ENCODE measurements at regions of chr14 and their contacts with region 1.

Region 1: GRCh38 chr14:50311975-50312733 is at the starts of genes DMAC2L and L2HGDH:
- DNase-seq: peak; percentile 80 to 95 (median 88)
- ATAC-seq: peak; percentile 94
- H3K4me3 ChIP-seq: peak within 1 kb of the TSS; percentile 88
- H3K4me3 Mint-ChIP-seq: peak within 1 kb of the TSS; percentile 86 to 99 (median 96)
- H3K27ac ChIP-seq: peak within 1 kb of the TSS; percentile 84
- H3K27ac Mint-ChIP-seq: peak within 1 kb of the TSS; percentile 95 to 99 (median 98)
- H3K4me1 ChIP-seq: peaks cover 11 to 12% of the 10 kb centered on the region in 2 donors
- H3K4me1 Mint-ChIP-seq: peaks cover 16 to 56% (median 46%) of the 10 kb centered on the region in 7 donors
- H3K27me3 ChIP-seq: no peaks in the 10 kb centered on the region
- H3K27me3 Mint-ChIP-seq: no peaks in the 10 kb centered on the region
- total RNA-seq, gene DMAC2L: 15.5 to 21.2 (median 16.7) TPM
- total RNA-seq, gene L2HGDH: 3.7 to 10.1 (median 4.8) TPM

Region 2: DNA sequence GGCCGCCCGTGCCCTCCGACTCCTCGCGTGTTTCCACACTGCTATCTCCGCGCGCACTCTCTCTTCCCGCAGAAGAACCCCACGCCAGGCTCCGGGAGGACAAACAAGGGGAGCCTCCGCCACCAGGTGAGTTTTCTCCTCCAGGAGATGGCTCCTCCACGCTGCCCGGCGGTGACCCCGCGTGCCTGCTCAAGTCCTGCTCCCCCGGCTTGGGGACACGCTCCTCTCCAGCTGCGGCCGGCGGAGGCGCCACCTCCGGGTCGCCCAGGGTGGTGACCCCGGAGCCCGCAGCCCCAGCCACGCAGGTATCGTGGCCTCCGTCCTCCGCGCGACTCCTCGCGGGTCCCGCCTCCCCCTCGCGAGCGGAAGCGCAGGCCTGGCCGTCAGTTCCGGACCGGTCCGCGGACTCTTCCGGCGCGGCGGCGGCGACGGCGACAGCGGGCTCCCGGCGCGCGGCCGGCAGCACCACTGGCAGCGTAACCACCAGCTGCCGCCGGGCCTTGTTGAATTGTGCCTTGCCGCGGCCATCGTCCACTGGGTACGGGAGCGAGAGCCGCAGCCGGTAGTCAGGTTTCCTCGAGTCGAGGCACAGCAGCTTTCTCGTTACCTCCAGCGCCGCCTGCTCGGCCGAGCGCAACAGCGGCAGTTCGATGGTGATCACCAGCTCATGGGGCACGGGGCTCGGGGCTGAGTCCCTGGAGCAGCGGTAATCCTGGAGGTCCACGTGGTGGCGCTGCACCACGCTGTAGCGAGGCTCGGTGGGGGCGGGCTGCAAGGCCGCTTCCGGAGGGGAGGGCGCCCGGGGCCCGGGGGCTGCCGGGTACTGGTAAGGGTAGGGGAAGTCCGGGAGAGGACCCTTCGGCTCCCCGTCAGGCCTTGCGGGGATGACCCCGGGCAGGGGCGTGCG is 678.3 kb before region 1 on chr14:
- CTCF ChIA-PET with region 1: interaction called, 4 read pairs
- POLR2A ChIA-PET with region 1: no interaction called
- intact Hi-C with region 1: loop called in 1 of 2 experiments (anchors 1 kb)
- DNase-seq: peak; percentile 89 to 96 (median 93)
- ATAC-seq: peak; percentile 92
- H3K4me3 ChIP-seq: peak overlapping the region; percentile 99
- H3K4me3 Mint-ChIP-seq: peak overlapping the region; percentile 81 to 99 (median 96)
- H3K27ac ChIP-seq: peak overlapping the region; percentile 96
- H3K27ac Mint-ChIP-seq: peak overlapping the region; percentile 71 to 96 (median 90)
- H3K4me1 ChIP-seq: peaks cover 19 to 29% of the 10 kb centered on the region in 2 donors
- H3K4me1 Mint-ChIP-seq: peaks cover 35 to 71% (median 52%) of the 10 kb centered on the region in 7 donors
- H3K27me3 ChIP-seq: no peaks in the 10 kb centered on the region
- H3K27me3 Mint-ChIP-seq: no peaks in the 10 kb centered on the region

Region 3: GRCh38 chr14:49828640-49829039 is 483.5 kb before region 1 on chr14:
- CTCF ChIA-PET with region 1: no interaction called
- POLR2A ChIA-PET with region 1: no interaction called
- intact Hi-C with region 1: no loop called
- DNase-seq: no peak
- ATAC-seq: no peak
- H3K4me3 ChIP-seq: no peak overlapping the region
- H3K4me3 Mint-ChIP-seq: no peak overlapping the region
- H3K27ac ChIP-seq: no peak overlapping the region
- H3K27ac Mint-ChIP-seq: peak overlapping the region in 1 of 9 donors; percentile 65
- H3K4me1 ChIP-seq: no peaks in the 10 kb centered on the region
- H3K4me1 Mint-ChIP-seq: peaks cover 0 to 24% (median 10%) of the 10 kb centered on the region in 7 donors
- H3K27me3 ChIP-seq: no peaks in the 10 kb centered on the region
- H3K27me3 Mint-ChIP-seq: no peaks in the 10 kb centered on the region

Region 4: DNA sequence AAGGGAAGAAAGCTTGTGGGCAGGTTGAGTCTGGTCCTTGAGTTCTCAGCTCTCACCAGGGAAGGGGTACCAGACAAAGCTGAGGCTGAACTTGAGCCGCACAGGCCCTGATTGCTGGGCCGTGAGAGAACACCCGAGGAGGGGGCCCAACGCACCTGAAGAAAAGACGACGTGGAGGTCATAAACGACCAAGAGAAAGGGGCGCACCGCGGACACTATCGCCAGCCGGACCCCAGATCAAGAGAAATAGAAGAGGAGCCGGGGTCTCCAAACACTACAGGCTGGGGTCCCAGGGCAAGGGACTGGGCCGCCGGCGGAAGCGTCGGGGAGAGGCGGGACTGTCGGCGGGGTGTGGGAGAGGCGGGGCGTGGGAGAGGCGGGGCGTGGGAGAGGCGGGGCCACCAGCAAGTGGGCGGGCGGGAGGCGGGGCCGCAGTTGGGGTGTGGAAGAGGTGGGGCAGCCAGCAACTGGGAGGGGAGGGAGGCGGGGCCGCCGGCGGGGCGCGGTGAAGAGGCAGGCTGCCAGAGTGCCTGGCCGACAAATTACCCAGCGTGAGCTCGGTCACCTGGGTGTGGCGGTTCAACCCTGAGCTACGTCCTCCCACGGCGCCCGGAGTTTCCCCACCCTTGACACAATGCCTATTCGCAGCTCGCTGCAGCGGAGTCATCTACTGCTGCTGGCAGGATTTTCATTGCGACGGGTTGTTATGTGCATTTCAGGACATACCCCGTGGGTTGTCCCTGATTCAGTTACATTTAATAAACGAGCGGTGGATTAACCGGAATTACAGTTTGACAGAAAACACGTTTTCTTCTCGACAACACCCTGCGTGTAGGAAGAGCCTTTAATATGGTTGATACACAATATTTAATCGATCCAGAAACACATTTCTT is 444.1 kb before region 1 on chr14:
- CTCF ChIA-PET with region 1: no interaction called
- POLR2A ChIA-PET with region 1: no interaction called
- intact Hi-C with region 1: loop called in 1 of 2 experiments (anchors 2 kb)
- DNase-seq: peak; percentile 87 to 97 (median 93)
- ATAC-seq: peak; percentile 96
- H3K4me3 ChIP-seq: peak overlapping the region; percentile 75
- H3K4me3 Mint-ChIP-seq: peak overlapping the region; percentile 79 to 95 (median 90)
- H3K27ac ChIP-seq: peak overlapping the region; percentile 91
- H3K27ac Mint-ChIP-seq: peak overlapping the region; percentile 93 to 99 (median 97)
- H3K4me1 ChIP-seq: peaks cover 31 to 35% of the 10 kb centered on the region in 2 donors
- H3K4me1 Mint-ChIP-seq: peaks cover 9 to 31% (median 17%) of the 10 kb centered on the region in 7 donors
- H3K27me3 ChIP-seq: no peaks in the 10 kb centered on the region
- H3K27me3 Mint-ChIP-seq: no peaks in the 10 kb centered on the region

Region 5: GRCh38 chr14:50363714-50364111 is 51.6 kb after region 1 on chr14:
- CTCF ChIA-PET with region 1: no interaction called
- POLR2A ChIA-PET with region 1: interaction called, 4 read pairs
- intact Hi-C with region 1: loop called (anchors 1 kb)
- DNase-seq: peak in 8 of 9 donors; percentile 36 to 68 (median 57)
- ATAC-seq: peak; percentile 94
- H3K4me3 ChIP-seq: peak overlapping the region; percentile 67
- H3K4me3 Mint-ChIP-seq: peak overlapping the region; percentile 80 to 94 (median 90)
- H3K27ac ChIP-seq: peak overlapping the region; percentile 72
- H3K27ac Mint-ChIP-seq: peak overlapping the region; percentile 90 to 95 (median 93)
- H3K4me1 ChIP-seq: peaks cover 10 to 12% of the 10 kb centered on the region in 2 donors
- H3K4me1 Mint-ChIP-seq: peaks cover 23 to 58% (median 43%) of the 10 kb centered on the region in 7 donors
- H3K27me3 ChIP-seq: no peaks in the 10 kb centered on the region
- H3K27me3 Mint-ChIP-seq: no peaks in the 10 kb centered on the region

Region 6: GRCh38 chr14:50773632-50774541 is 461.7 kb after region 1 on chr14:
- CTCF ChIA-PET with region 1: no interaction called
- POLR2A ChIA-PET with region 1: no interaction called
- intact Hi-C with region 1: loop called in 1 of 2 experiments (anchors 5 kb)
- DNase-seq: peak in 1 of 9 donors; percentile 38
- ATAC-seq: peak; percentile 65
- H3K4me3 ChIP-seq: no peak overlapping the region
- H3K4me3 Mint-ChIP-seq: peak overlapping the region in 3 of 10 donors; percentile 1 to 27 (median 18)
- H3K27ac ChIP-seq: no peak overlapping the region
- H3K27ac Mint-ChIP-seq: peak overlapping the region in 8 of 9 donors; percentile 1 to 78 (median 37)
- H3K4me1 ChIP-seq: peaks cover 9 to 13% of the 10 kb centered on the region in 2 donors
- H3K4me1 Mint-ChIP-seq: peaks cover 17 to 41% (median 28%) of the 10 kb centered on the region in 7 donors
- H3K27me3 ChIP-seq: no peaks in the 10 kb centered on the region
- H3K27me3 Mint-ChIP-seq: no peaks in the 10 kb centered on the region

Measured in naive thymus-derived CD4-positive, alpha-beta T cell (primary cell).